ENCODE measurements at regions of chrX and their contacts with region 1.

Region 1: DNA sequence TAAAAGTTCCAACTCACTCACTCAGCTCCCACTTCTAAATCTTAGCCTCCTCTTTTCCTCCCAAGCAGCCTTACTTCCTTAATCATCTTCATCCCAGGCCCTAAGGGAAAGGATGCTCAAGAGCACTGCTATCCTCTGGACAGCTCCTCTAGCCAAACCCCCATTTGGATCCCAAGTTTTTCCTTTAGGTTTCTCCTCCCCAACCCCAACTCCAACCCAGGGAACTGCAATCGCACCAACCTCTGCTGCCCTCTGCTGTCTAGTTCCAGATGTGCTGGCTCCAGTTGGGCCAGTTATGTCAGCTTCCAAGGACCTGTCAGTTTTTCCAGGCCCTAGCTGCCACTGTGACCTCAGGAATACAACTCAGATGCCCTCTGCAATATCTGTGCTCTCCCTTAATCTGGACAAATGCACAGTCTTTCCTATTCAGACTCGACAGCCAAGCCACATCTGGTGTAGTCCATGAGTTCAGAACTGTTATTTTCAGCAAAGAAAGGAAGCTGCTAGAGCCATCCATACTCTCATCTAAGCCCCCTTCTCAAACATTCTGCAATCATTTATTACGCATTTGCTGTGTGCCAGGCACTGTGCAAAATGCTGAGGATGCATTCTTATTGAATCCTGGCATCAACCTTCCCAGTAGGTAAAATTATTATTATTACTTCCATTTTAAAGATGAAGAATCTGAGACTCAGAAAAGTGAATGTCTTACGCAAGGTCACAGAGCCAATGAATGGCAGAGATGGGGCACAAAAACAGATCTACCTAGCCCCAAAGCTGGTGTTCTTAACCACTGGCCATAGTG is 12.3 kb upstream of the XPNPEP2 start:
- DNase-seq: peak; percentile 52 to 59
- H3K4me3 ChIP-seq: no peak overlapping the region
- H3K27ac ChIP-seq: no peak overlapping the region
- H3K4me1 ChIP-seq: no peaks in the 10 kb centered on the region
- H3K27me3 ChIP-seq: no peaks in the 10 kb centered on the region
- CTCF ChIP-seq: peak in 4 of 6 experiments; percentile 55 to 76 (median 61)
- POLR2A ChIP-seq: no peak

Region 2: DNA sequence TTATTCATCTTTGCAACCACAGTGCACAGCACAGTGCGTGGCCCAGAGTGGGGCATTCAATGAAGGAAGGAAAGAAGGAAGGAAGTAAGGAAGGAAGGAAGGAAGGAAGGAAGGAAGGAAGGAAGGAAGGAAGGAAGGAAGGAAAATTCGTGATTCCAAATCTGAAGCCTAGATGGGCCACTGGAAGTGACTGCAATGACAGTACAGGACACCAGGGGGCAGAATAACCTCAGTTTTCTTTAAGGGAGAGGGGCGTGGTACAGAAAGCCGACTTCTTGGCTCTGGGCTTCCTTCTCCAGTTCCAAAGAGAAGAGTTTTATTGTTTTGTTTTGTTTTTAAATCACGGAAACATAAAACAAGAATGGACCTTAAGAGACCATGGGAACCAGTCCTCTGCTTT is 119.6 kb before region 1 on chrX:
- intact Hi-C with region 1: loop called (anchors 10 kb)
- DNase-seq: peak; percentile 45 to 53
- H3K4me3 ChIP-seq: no peak overlapping the region
- H3K27ac ChIP-seq: no peak overlapping the region
- H3K4me1 ChIP-seq: no peaks in the 10 kb centered on the region
- H3K27me3 ChIP-seq: no peaks in the 10 kb centered on the region
- CTCF ChIP-seq: peak; percentile 14 to 82 (median 64)
- POLR2A ChIP-seq: no peak

Region 3: DNA sequence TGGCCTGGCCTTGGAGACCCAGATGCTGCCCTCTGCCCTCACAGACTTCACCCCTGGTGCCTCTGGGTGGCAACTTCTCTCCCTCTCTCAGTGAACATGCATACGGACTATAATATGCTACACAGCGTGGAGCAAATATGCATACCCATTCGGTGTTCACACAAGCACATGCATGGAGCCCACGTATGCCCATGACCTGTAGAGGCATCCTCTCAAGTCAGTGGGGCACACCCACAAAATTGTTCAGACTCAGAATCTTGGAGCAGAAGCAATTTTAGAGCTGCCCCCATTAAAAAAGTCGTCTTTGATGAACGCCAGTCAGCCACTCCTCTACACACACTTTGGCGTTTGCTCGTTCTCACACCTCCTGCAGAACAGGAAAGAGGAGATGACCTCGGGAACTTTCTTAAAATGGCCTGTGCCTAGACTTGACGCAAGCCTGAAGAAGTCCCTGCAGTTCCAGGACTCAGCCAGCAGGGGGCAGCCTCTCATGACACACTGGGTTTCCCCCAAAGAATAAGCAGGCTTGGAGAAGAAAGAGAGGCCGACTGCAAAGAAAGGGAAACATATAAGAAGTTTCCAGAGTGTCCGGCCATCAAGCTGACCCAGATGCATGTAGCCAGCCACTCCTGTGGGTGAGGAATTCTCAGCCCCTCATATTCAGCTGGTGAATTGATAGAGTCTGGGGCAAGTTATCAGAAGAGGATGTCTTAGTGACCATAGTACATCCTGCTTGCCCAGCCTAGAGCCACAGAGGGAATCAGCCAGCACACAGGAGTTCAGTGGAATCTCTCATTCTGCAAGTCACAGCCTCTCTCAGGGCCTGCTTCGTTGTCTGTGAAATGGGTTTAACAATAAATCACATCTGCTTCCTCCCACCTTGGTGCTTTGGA is 89.0 kb before region 1 on chrX:
- intact Hi-C with region 1: loop called (anchors 5 kb)
- DNase-seq: peak; percentile 56 to 64
- H3K4me3 ChIP-seq: no peak overlapping the region
- H3K27ac ChIP-seq: no peak overlapping the region
- H3K4me1 ChIP-seq: no peaks in the 10 kb centered on the region
- H3K27me3 ChIP-seq: no peaks in the 10 kb centered on the region
- CTCF ChIP-seq: peak; percentile 62 to 89 (median 74)
- POLR2A ChIP-seq: no peak

Measured in thyroid gland (tissue), 4 donors.